Right ventricle myocardium superior (tissue), 1 donor: ENCODE measurements at regions of chr5 and their contacts with region 1.

Region 1: DNA sequence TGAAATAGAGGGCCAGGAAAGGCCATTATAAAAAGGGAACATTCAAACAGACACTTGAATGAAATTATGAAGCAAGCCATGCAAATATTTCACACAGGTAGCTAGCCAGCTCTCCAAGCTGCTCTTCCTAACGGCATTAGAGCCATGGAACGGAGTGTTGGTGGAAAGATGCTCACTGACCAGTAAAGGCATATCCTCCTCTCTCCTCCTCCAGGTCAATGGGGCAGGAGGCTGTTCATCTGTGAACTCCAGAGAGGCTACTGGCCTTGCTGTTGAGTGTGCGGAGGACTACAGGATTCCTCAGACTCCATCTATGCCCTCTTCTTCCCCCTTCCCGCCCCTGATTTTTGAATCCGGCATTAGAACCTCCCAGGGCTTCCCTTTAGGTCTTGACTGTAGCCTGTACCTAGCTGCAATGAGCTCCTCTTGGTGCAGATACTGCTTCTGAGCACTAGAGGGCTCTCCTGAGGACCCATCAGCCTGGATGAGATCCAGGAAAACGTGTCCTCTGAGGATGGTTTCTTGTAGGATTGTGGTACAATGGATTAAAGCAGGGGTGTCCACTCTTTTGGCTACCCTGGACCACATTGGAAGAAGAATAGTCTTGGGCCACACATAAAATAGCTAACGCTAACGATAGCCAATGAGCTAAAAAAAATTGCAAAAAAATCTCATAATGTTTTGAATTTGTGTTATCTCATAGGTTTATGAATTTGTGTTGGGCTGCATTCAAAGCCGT is 162.2 kb downstream of the SREK1 start:
- DNase-seq: no peak
- ATAC-seq: peak; percentile 88

Region 2: GRCh38 chr5:66498791-66499207 is 192.5 kb after region 1 on chr5:
- intact Hi-C with region 1: loop called (anchors 5 kb)
- DNase-seq: no peak
- ATAC-seq: peak; percentile 92

Region 3: DNA sequence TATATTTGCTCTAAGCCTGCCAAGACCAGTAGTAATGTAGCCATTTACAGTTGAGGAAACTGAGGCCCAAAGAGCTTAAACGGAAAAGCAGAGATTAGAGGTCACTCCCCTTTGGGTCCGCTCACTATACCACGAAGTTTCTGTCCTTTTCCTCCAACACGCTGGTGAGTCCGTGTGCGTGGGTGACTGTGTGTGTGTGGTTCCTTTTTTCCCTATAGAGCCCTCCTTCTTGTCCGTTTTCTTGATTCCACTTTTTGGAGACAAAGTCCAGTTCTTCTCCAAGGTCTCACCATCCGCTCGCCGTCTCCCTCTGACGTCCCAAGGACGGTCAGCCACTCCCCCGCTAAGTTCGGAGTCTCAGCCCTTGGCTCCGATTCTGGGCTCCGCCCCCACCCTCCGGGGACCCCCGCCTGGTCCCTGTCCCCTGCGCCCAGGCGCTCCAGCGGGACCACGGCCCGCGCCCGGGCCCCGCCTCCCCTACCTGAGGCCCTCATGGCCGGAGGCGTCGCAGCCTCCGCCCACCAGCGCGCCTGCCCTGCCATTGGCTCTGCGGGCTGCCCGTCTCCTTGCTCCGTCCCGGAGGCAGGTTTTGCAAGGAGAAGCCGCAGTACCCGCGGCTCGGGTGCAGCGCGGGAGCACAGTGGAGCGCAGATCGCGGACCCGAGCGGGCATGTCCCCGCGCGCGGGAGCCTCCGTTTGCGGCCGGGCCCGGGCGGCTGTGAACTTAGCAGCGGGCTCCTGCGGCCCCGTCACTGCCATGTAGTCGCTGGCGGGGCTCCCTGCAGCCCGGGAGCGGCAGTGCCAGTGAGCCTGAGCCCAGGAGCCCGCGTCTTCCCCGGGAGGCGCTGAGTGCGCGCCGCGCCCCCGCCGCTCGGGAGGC is 289.7 kb after region 1 on chr5 and contains the start of gene MAST4:
- intact Hi-C with region 1: loop called (anchors 10 kb)
- DNase-seq: peak; percentile 94
- ATAC-seq: peak; percentile 95
- total RNA-seq, gene MAST4: 42.0 TPM

Region 4: DNA sequence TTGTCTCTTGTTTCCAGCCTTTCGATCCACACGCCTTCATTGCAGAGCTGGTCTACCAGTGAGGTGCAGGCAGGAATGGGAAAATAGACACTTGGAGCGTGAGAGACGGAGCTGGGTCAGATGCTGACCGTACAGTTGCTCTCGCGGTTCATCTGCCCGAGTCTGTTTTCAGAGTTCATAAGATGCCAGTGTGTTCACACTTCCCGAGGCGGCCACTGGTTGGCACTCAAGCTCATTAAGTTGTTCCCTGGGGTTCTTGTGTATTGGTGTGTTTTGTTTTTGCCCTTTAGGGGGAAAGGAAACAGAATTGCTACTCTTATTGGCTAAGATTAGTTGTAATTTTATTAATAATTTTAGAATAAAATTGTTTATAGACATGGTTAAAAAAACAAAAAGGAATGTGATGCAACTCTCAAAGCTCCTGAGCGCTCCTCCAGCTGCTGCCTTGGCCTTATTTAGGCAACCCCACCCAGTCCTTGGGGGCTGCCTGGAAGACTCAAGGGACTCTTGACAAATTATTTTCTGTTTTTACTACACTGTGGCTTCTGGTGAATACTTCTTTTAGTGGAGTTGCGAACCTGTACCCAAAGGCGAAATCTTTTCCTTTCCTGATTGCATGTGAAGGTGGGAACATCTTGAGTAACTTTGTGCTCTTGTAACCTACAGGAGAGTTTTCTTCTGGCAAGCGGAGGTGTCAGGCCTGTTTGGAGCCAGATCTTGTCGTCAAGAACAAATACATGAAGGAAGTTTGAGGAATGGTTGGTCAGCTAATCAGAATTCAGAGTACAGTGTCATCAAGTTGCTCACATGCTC is 436.0 kb after region 1 on chr5:
- intact Hi-C with region 1: loop called (anchors 5 kb)
- DNase-seq: peak; percentile 70
- ATAC-seq: peak; percentile 63

Region 5: DNA sequence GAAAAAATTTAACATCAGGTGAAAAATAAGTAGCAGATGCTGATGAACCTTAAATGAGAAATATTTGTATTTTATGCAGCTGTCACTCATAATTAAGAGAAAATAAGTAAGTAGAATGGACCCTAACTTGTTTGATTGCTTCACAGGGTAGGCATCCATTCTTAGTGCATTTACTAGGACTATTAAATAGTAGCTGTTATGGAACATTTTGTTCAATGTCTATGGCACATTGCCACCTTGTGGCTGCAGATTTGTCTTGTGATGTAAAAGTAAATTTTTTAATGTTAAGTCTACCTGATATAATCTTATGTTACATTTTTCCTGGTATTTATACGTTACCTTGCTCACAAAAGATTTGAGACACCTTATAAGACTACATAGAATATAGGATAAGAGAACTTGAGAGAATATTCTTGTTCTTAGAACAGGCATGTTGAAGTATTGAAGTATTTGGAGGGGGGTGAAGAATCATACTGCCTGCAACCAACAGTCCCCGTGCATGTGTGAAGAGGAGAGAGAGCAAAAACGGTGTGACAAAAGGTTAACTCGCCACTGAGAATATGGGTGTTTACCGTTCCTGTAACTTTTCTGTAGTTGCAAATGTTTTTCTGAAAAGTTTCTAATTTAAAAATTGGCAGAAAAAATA is 451.0 kb after region 1 on chr5:
- intact Hi-C with region 1: loop called (anchors 5 kb)
- DNase-seq: no peak
- ATAC-seq: peak; percentile 80